CD4-positive, alpha-beta memory T cell (primary cell): ENCODE measurements at regions of chr15 and their contacts with region 1.

Region 1: DNA sequence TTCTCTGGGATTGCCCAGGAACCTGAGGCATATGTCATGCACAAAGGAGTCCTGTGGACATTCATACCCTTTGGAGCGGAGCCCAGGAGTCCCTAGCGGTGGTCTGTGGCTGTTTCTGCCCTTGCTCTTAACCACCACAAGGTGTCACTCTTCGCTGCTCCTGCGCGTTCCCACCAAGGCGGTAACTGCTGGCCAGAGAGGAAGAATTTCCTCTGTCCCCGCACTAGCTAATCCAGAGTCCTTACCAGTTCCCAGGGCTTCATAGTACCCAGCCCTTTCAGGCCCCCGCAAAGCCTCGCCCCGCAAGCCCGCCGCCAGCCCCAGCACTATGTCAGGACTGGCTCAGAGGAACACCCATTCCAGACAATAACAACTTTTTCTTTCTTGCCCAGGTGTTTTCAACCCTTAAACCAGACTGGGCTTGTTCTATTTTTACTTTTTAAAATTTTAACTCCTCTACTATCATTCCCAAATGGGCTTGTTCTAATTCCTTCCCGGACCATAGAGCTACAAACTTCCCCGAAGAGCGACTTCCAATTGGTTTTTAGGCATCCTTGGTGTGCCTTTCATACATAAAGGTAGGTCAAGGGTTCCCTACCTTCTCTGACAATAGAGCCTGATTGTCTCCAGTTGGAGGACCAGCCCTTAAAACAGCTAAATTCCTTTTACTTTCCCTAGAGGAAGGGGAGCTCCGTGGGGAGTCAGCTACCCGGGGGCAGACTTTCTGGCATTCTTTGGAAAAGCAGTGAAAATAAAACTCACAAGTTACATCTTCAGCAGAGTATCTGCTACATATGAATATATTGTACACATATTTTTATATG is 31.8 kb upstream of the ZNF774 start:
- DNase-seq: peak; percentile 64 to 71 (median 68)
- H3K4me3 ChIP-seq: no peak overlapping the region
- H3K4me3 Mint-ChIP-seq: peak overlapping the region in 2 of 8 donors; percentile 53 to 56
- H3K27ac ChIP-seq: no peak overlapping the region
- H3K27ac Mint-ChIP-seq: peak overlapping the region in 2 of 7 donors; percentile 53 to 73
- H3K4me1 ChIP-seq: peaks cover 7% of the 10 kb centered on the region
- H3K4me1 Mint-ChIP-seq: peaks cover 5 to 8% (median 7%) of the 10 kb centered on the region in 4 donors
- H3K27me3 ChIP-seq: no peaks in the 10 kb centered on the region
- H3K27me3 Mint-ChIP-seq: peaks cover 0 to 3% of the 10 kb centered on the region in 2 donors

Region 2: GRCh38 chr15:90214553-90215196 is 105.6 kb before region 1 on chr15:
- CTCF ChIA-PET with region 1: no interaction called
- POLR2A ChIA-PET with region 1: no interaction called
- intact Hi-C with region 1: no loop called
- DNase-seq: no peak
- H3K4me3 ChIP-seq: no peak overlapping the region
- H3K4me3 Mint-ChIP-seq: no peak overlapping the region
- H3K27ac ChIP-seq: no peak overlapping the region
- H3K27ac Mint-ChIP-seq: peak overlapping the region in 1 of 7 donors; percentile 60
- H3K4me1 ChIP-seq: peaks cover 18% of the 10 kb centered on the region
- H3K4me1 Mint-ChIP-seq: peaks cover 24 to 37% (median 32%) of the 10 kb centered on the region in 4 donors
- H3K27me3 ChIP-seq: no peaks in the 10 kb centered on the region
- H3K27me3 Mint-ChIP-seq: no peaks in the 10 kb centered on the region

Region 3: GRCh38 chr15:90300988-90301706 is 19.1 kb before region 1 on chr15:
- CTCF ChIA-PET with region 1: interaction called, 41 read pairs
- POLR2A ChIA-PET with region 1: interaction called, 3 read pairs
- intact Hi-C with region 1: no loop called
- DNase-seq: peak; percentile 39 to 55 (median 43)
- H3K4me3 ChIP-seq: no peak overlapping the region
- H3K4me3 Mint-ChIP-seq: peak overlapping the region in 1 of 8 donors; percentile 55
- H3K27ac ChIP-seq: no peak overlapping the region
- H3K27ac Mint-ChIP-seq: peak overlapping the region in 1 of 7 donors; percentile 70
- H3K4me1 ChIP-seq: peaks cover 11% of the 10 kb centered on the region
- H3K4me1 Mint-ChIP-seq: peaks cover 8 to 24% (median 14%) of the 10 kb centered on the region in 4 donors
- H3K27me3 ChIP-seq: no peaks in the 10 kb centered on the region
- H3K27me3 Mint-ChIP-seq: no peaks in the 10 kb centered on the region

Region 4: DNA sequence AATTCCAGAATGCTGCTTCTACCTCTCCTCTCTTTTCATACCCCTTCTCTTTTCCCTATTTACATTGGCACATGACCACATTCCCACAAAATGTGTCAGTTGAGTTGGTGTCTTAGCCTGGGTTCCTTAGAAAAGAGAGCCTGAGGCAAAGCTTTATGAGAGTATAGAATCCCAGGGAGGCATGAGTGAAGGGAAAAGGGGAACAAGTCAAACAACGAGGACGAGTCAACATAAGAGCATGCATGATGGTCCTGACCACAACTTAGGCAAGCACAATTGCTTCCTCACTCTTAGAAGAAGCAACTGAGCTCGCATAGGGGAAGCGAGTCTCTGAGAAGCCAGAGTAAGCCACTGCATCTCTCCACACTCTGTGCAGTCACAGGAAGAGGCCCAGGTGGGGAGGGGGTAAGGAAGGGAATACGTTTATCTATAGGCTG is 16.4 kb after region 1 on chr15:
- CTCF ChIA-PET with region 1: interaction called, 25 read pairs
- POLR2A ChIA-PET with region 1: no interaction called
- intact Hi-C with region 1: no loop called
- DNase-seq: no peak
- H3K4me3 ChIP-seq: no peak overlapping the region
- H3K4me3 Mint-ChIP-seq: no peak overlapping the region
- H3K27ac ChIP-seq: no peak overlapping the region
- H3K27ac Mint-ChIP-seq: peak overlapping the region in 1 of 7 donors; percentile 53
- H3K4me1 ChIP-seq: peaks cover 6% of the 10 kb centered on the region
- H3K4me1 Mint-ChIP-seq: peaks cover 4 to 12% (median 6%) of the 10 kb centered on the region in 4 donors
- H3K27me3 ChIP-seq: no peaks in the 10 kb centered on the region
- H3K27me3 Mint-ChIP-seq: no peaks in the 10 kb centered on the region

Region 5: DNA sequence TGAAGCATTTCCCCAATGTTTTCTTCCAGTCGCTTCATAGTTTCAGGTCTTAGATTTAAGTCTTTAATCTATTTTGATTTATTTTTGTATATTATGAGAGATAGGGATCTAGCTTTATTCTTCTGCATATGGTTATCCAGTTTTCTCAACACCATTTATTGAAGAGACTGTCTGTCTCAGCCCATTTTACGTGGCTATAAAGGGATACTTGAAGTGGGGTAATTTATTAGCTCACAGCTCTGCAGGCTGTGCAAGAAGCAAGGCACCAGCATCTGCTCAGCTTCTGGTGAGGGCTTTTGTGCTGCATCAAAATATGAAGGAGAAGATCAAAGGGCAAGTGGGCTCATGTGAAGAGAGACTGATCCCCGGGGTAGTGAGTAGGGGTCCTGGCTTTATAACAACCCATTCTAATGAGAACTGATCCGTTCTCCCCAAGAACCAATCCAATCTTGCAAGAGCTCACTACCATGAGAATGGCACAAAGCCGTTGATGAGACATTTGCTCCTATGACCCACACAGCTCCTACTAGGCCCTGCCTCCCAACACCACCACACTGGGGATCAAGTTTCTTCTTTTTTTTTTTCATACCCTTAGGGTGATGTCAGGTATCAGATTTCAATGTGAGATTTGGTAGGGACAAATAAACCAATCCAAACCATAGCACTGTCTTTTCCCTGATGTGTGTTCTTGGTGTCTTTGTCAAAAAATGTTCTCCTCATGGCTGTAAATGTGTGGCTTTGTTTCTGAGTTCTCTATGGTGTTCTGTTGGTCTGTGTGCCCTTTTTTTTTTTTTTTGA is 131.0 kb after region 1 on chr15:
- CTCF ChIA-PET with region 1: interaction called, 17 read pairs
- POLR2A ChIA-PET with region 1: no interaction called
- intact Hi-C with region 1: no loop called
- DNase-seq: no peak
- H3K4me3 ChIP-seq: no peak overlapping the region
- H3K4me3 Mint-ChIP-seq: no peak overlapping the region
- H3K27ac ChIP-seq: no peak overlapping the region
- H3K27ac Mint-ChIP-seq: peak overlapping the region in 2 of 7 donors; percentile 48 to 68
- H3K4me1 ChIP-seq: no peaks in the 10 kb centered on the region
- H3K4me1 Mint-ChIP-seq: peaks cover 0 to 9% (median 2%) of the 10 kb centered on the region in 4 donors
- H3K27me3 ChIP-seq: no peaks in the 10 kb centered on the region
- H3K27me3 Mint-ChIP-seq: no peaks in the 10 kb centered on the region

Region 6: GRCh38 chr15:90529371-90530249 is 209.3 kb after region 1 on chr15 and contains the start of gene CRTC3:
- CTCF ChIA-PET with region 1: no interaction called
- POLR2A ChIA-PET with region 1: no interaction called
- intact Hi-C with region 1: no loop called
- DNase-seq: peak; percentile 61 to 73 (median 65)
- H3K4me3 ChIP-seq: peak within 1 kb of the TSS; percentile 77 to 84
- H3K4me3 Mint-ChIP-seq: peak within 1 kb of the TSS; percentile 92 to 98 (median 94)
- H3K27ac ChIP-seq: peak within 1 kb of the TSS; percentile 64
- H3K27ac Mint-ChIP-seq: peak within 1 kb of the TSS; percentile 90 to 95 (median 94)
- H3K4me1 ChIP-seq: peaks cover 40% of the 10 kb centered on the region
- H3K4me1 Mint-ChIP-seq: peaks cover 29 to 49% (median 42%) of the 10 kb centered on the region in 4 donors
- H3K27me3 ChIP-seq: no peaks in the 10 kb centered on the region
- H3K27me3 Mint-ChIP-seq: no peaks in the 10 kb centered on the region
- total RNA-seq, gene CRTC3: 72.2 to 75.5 TPM

Region 7: GRCh38 chr15:90603893-90604292 is 283.6 kb after region 1 on chr15:
- CTCF ChIA-PET with region 1: interaction called, 9 read pairs
- POLR2A ChIA-PET with region 1: no interaction called
- intact Hi-C with region 1: loop called (anchors 1 kb)
- DNase-seq: peak in 4 of 5 donors; percentile 22 to 35 (median 30)
- H3K4me3 ChIP-seq: no peak overlapping the region
- H3K4me3 Mint-ChIP-seq: no peak overlapping the region
- H3K27ac ChIP-seq: no peak overlapping the region
- H3K27ac Mint-ChIP-seq: peak overlapping the region in 5 of 7 donors; percentile 12 to 75 (median 60)
- H3K4me1 ChIP-seq: peaks cover 19% of the 10 kb centered on the region
- H3K4me1 Mint-ChIP-seq: peaks cover 9 to 41% (median 31%) of the 10 kb centered on the region in 4 donors
- H3K27me3 ChIP-seq: no peaks in the 10 kb centered on the region
- H3K27me3 Mint-ChIP-seq: no peaks in the 10 kb centered on the region